Dendritic cell treated with granulocyte-macrophage colony-stimulating factor and Interleukin-4, amounts not matched to agents 40 ng/mL and 50 ng/mL, for 4 days (primary cell): ENCODE measurements at regions of chr5 and their contacts with region 1.

Region 1: GRCh38 chr5:134527146-134527960 is 1.9 kb downstream of the JADE2 start:
- H3K4me3 Mint-ChIP-seq: peak overlapping the region; percentile 95
- H3K27ac Mint-ChIP-seq: peak overlapping the region; percentile 98
- H3K4me1 Mint-ChIP-seq: peaks cover 20% of the 10 kb centered on the region
- H3K27me3 Mint-ChIP-seq: no peaks in the 10 kb centered on the region

Region 2: GRCh38 chr5:134240421-134240962 is 286.9 kb before region 1 on chr5:
- intact Hi-C with region 1: no loop called
- H3K4me3 Mint-ChIP-seq: no peak overlapping the region
- H3K27ac Mint-ChIP-seq: peak overlapping the region; percentile 81
- H3K4me1 Mint-ChIP-seq: peaks cover 15% of the 10 kb centered on the region
- H3K27me3 Mint-ChIP-seq: peaks cover 4% of the 10 kb centered on the region

Region 3: GRCh38 chr5:134411546-134412266 is 115.6 kb before region 1 on chr5 and contains the start of gene CDKN2AIPNL:
- intact Hi-C with region 1: loop called (anchors 1 kb)
- H3K4me3 Mint-ChIP-seq: peak within 1 kb of the TSS; percentile 94
- H3K27ac Mint-ChIP-seq: peak within 1 kb of the TSS; percentile 87
- H3K4me1 Mint-ChIP-seq: peaks cover 28% of the 10 kb centered on the region
- H3K27me3 Mint-ChIP-seq: no peaks in the 10 kb centered on the region

Region 4: DNA sequence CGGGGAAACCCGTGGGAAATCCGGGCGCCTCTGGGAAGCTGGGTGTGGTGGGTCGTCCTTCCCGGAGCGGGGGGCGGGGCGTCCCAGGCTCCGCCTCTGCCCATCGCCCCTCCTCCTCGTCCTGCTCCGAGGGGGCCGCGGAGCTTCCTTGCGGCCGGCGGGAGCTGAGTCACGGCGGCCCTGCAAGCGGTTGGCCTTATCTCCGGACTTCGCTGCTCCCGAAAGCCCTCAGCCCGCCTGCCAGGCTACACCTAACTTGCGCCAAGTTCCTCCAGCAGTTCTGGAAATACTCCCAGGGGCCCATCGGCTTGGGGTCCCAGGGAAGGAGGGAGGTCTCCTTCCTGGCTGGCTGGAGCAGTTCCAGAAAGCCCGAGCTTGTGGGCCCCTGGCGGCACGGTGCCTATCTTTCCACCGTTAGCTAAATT is 61.5 kb before region 1 on chr5:
- intact Hi-C with region 1: loop called (anchors 2 kb)
- H3K4me3 Mint-ChIP-seq: peak overlapping the region; percentile 71
- H3K27ac Mint-ChIP-seq: peak overlapping the region; percentile 84
- H3K4me1 Mint-ChIP-seq: peaks cover 32% of the 10 kb centered on the region
- H3K27me3 Mint-ChIP-seq: no peaks in the 10 kb centered on the region

Region 5: DNA sequence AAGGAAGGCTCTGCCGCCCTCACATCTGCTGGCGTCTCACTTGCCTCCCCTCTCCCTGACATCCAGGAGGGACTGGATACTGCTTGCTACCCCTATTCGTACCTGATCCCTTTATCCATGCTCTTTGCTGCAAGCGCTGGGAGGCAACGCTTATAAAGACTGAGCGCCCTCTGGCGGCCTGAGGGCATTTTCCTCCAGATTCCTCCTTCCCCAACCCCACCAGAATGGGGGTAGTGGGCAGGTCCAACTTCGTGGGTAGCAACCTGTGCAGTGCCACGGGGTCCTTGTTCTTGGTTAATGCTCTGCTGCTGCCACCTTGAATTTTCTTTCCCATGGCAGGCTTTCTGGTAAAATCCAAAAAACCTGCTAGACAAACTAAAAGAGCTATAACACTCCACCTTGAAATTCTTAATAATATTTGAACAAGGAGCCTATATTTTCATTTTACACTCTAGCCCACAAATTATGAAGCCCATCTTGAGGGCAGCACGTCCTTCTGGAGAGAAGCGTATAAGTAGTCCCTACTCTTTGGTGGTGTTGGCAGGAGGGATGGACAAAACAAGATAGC is 50.5 kb after region 1 on chr5:
- intact Hi-C with region 1: loop called (anchors 1 kb)
- H3K4me3 Mint-ChIP-seq: no peak overlapping the region
- H3K27ac Mint-ChIP-seq: no peak overlapping the region
- H3K4me1 Mint-ChIP-seq: peaks cover 20% of the 10 kb centered on the region
- H3K27me3 Mint-ChIP-seq: no peaks in the 10 kb centered on the region